ENCODE measurements at regions of chr16 and their contacts with region 1.

Region 1: DNA sequence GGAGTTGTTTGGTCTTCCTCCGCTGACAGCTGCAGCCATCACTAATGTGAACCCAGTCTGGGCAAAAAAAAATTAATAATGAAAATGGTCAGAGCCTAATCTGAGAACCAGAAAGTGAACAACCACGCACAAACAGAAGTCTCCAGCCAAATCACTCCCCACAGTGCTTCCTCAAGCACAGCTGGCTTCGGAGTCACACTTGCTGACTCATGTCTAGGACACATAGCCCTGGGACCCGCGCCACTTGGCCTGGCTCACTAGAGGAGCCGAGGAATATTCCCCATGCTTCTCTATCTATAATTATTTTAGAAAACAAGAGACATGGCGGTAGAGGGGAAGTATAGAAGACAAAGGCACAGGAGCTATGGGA is 109.1 kb downstream of the ZFHX3 start:
- DNase-seq: peak; percentile 88 to 97 (median 89)
- ATAC-seq: peak; percentile 94 to 96 (median 96)
- H3K4me3 ChIP-seq: peak overlapping the region in 9 of 12 donors; percentile 2 to 39 (median 17)
- H3K27ac ChIP-seq: peak overlapping the region; percentile 62 to 91 (median 78)
- H3K4me1 ChIP-seq: peaks cover 0 to 56% (median 37%) of the 10 kb centered on the region in 12 donors
- H3K27me3 ChIP-seq: no peaks in the 10 kb centered on the region
- CTCF ChIP-seq: no peak
- POLR2A ChIP-seq: no peak

Region 2: GRCh38 chr16:72856797-72857196 is 82.0 kb before region 1 on chr16:
- intact Hi-C with region 1: loop called in 4 of 10 experiments (anchors 5 to 10 kb)
- DNase-seq: no peak
- ATAC-seq: no peak
- H3K4me3 ChIP-seq: no peak overlapping the region
- H3K27ac ChIP-seq: no peak overlapping the region
- H3K4me1 ChIP-seq: peaks cover 0 to 51% (median 16%) of the 10 kb centered on the region in 12 donors
- H3K27me3 ChIP-seq: no peaks in the 10 kb centered on the region
- CTCF ChIP-seq: peak in 5 of 12 donors; percentile 14 to 29 (median 23)
- POLR2A ChIP-seq: no peak

Region 3: DNA sequence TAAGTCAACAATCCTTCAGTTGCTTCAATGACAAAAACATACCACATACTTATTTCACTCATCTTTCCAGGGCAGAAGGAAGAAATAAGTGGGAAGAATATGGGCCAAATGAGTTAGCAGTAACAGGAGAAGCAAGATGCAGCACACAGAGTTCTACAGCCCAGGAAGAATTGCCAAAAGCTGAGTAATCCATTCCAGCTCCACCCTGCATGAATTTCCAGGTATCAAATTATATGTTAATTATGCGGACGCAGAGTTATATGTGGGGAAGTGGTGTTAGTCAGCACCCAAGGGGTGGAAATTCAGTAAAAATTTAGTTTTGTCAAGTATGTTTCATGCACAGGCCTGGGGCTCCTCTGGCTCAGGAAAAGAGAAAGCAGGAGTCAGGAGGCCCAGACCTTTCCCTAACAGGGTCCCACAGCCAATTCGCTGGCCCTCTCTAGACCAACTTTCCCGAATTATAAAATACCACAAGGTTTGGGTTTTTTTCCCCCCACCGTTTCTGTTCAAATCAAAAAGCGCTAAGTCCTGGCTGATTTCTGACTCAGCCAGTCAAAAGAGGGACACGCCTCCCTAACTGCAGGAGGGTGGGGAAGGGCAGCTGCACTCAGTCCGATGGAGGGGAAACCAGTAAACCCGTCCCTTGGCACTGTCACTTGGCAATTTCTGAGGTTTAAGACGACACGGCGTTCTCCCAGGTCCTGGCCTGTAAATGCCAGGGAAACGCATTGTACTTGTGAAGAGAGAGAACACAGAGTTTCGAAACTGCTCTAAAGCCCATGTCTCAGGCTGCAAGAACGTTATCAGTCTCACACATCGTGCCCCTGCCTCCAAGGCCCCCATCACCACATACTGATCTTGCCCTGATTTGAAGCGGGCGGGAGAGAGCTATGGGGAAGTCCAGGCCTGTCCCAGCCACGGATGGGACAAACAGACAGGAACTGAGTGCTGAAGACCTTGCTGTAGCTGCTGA is 51.1 kb after region 1 on chr16:
- intact Hi-C with region 1: loop called in 1 of 10 experiments (anchors 2 kb)
- DNase-seq: peak in 4 of 5 donors; percentile 33 to 74 (median 50)
- ATAC-seq: peak; percentile 42 to 72 (median 62)
- H3K4me3 ChIP-seq: peak overlapping the region in 5 of 12 donors; percentile 6 to 30 (median 12)
- H3K27ac ChIP-seq: peak overlapping the region; percentile 11 to 82 (median 68)
- H3K4me1 ChIP-seq: peaks cover 20 to 90% (median 68%) of the 10 kb centered on the region in 12 donors
- H3K27me3 ChIP-seq: no peaks in the 10 kb centered on the region
- CTCF ChIP-seq: no peak
- POLR2A ChIP-seq: no peak

Region 4: DNA sequence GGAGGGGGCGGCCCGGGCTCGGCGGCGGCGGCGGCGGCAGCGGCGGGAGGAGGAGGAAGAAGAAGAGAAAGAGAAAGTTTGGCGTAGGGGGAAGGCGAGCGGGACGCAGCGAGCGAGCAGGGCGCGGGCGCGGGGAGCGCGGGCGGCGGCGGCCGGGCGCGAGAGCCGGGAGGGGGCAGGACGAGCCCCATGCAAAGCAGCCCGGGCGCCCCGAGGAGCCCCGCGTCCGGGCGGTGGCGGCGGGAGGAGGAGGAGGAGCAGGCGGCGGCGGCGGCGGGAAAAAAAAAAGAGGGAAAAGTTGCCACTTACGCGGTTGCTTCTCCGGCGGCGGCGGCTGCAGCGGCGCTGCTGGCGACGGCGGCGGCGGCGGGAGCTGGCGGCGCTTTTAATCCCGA is 119.4 kb after region 1 on chr16:
- intact Hi-C with region 1: loop called in 2 of 10 experiments (anchors 5 to 10 kb)
- DNase-seq: peak; percentile 53 to 76 (median 54)
- ATAC-seq: peak in 2 of 4 donors; percentile 41 to 62
- H3K4me3 ChIP-seq: peak overlapping the region; percentile 57 to 94 (median 78)
- H3K27ac ChIP-seq: peak overlapping the region; percentile 85 to 98 (median 93)
- H3K4me1 ChIP-seq: peaks cover 0 to 56% (median 26%) of the 10 kb centered on the region in 12 donors
- H3K27me3 ChIP-seq: peaks cover 0 to 17% (median 5%) of the 10 kb centered on the region in 9 donors
- CTCF ChIP-seq: peak in 2 of 12 donors; percentile 16 to 31
- POLR2A ChIP-seq: no peak

Measured in heart left ventricle (tissue), 16 donors.